Left colon (tissue), 2 donors: ENCODE measurements at regions of chr5 and their contacts with region 1.

Region 1: DNA sequence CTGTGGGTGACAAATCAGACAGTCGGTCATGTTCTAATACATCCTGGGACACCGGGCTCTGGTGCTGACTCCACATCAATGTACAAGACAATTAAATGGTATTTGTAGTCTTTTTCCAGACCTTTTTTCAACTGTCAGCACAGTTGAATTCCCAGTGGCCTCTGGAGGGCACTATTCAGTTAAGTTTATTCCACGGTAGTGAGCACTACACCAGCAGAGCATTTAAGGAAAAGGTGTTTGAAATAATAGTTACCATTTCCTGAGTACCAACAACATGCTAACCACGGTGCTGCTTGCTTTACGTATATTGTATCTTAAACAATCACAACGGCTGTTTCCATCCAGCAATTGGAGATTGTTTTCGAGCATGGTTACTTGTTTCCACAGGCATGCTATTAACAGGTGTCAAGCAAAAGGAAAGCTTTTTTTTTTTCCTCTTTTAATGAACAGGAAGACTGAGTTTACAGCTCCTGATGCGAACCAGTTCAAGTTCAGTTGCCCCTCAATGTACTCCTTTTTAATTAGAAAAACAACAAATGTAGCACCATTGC is 186.7 kb downstream of the PDZD2 start:
- DNase-seq: peak; percentile 16 to 28
- ATAC-seq: peak; percentile 68

Region 2: GRCh38 chr5:32076699-32077695 is 251.4 kb after region 1 on chr5:
- intact Hi-C with region 1: loop called in 1 of 2 experiments (anchors 5 kb)
- DNase-seq: peak in 1 of 2 donors; percentile 39
- ATAC-seq: no peak

Region 3: GRCh38 chr5:32092938-32093812 is 267.6 kb after region 1 on chr5:
- intact Hi-C with region 1: loop called in 1 of 2 experiments (anchors 5 kb)
- DNase-seq: peak; percentile 51 to 68
- ATAC-seq: peak; percentile 81